ENCODE measurements at regions of chr19 and their contacts with region 1.

Region 1: DNA sequence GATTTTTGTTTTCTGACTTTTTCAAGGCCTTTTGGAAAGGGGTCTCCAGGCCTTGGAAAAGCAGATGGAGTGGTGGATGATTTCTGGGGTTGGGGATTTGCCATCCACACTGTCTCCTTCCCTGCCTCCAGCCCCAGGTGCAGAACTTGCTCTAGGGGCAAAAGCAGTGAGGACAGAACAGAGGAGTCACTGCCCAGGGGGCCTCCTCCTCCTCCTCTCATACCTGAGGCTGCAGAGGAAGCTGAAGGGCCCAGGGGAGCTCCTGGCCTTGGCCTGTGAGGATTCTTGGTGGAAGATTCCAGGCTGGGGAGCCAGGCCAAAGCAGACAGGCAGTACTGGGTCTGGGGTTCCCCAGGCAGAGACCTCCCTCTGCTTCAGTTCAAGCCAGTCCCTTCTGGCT is 52.3 kb upstream of the URI1 start:
- DNase-seq: no peak
- ATAC-seq: no peak
- H3K4me3 ChIP-seq: no peak overlapping the region
- H3K27ac ChIP-seq: no peak overlapping the region
- H3K4me1 ChIP-seq: no peaks in the 10 kb centered on the region
- H3K27me3 ChIP-seq: no peaks in the 10 kb centered on the region
- CTCF ChIP-seq: no peak
- POLR2A ChIP-seq: no peak
- RAD21 ChIP-seq: no peak

Region 2: DNA sequence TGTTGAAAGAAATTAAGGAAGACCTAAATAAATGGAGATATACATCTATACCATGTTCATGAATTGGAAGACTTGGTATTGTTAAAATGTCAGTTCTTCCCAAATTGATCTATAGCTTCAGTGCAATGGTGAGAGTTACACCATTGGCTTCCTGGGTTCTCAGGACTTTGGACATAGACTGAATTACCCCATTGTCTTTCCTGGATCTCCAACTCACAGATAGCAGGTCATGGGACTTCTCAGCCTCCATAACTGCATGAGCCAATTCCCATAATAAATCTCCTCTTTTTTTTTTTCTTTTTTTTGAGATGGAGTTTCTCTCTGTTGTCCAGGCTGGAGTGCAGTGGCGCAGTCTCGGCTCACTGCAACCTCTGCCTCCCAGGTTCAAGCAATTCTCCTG is 39.2 kb before region 1 on chr19:
- CTCF ChIA-PET with region 1: no interaction called
- POLR2A ChIA-PET with region 1: interaction called, 12 read pairs
- dilution Hi-C with region 1: no loop called
- in situ Hi-C with region 1: no loop called
- intact Hi-C with region 1: no loop called
- DNase-seq: no peak
- ATAC-seq: no peak
- H3K4me3 ChIP-seq: no peak overlapping the region
- H3K27ac ChIP-seq: no peak overlapping the region
- H3K4me1 ChIP-seq: no peaks in the 10 kb centered on the region
- H3K27me3 ChIP-seq: peaks cover 6% of the 10 kb centered on the region
- CTCF ChIP-seq: no peak
- POLR2A ChIP-seq: no peak
- RAD21 ChIP-seq: no peak

Region 3: GRCh38 chr19:29927944-29928625 is 38.4 kb after region 1 on chr19:
- CTCF ChIA-PET with region 1: no interaction called
- POLR2A ChIA-PET with region 1: no interaction called
- dilution Hi-C with region 1: no loop called
- in situ Hi-C with region 1: no loop called
- intact Hi-C with region 1: no loop called
- DNase-seq: no peak
- ATAC-seq: no peak
- H3K4me3 ChIP-seq: no peak overlapping the region
- H3K27ac ChIP-seq: no peak overlapping the region
- H3K4me1 ChIP-seq: no peaks in the 10 kb centered on the region
- H3K27me3 ChIP-seq: no peaks in the 10 kb centered on the region
- CTCF ChIP-seq: no peak
- POLR2A ChIP-seq: no peak
- RAD21 ChIP-seq: no peak

Region 4: DNA sequence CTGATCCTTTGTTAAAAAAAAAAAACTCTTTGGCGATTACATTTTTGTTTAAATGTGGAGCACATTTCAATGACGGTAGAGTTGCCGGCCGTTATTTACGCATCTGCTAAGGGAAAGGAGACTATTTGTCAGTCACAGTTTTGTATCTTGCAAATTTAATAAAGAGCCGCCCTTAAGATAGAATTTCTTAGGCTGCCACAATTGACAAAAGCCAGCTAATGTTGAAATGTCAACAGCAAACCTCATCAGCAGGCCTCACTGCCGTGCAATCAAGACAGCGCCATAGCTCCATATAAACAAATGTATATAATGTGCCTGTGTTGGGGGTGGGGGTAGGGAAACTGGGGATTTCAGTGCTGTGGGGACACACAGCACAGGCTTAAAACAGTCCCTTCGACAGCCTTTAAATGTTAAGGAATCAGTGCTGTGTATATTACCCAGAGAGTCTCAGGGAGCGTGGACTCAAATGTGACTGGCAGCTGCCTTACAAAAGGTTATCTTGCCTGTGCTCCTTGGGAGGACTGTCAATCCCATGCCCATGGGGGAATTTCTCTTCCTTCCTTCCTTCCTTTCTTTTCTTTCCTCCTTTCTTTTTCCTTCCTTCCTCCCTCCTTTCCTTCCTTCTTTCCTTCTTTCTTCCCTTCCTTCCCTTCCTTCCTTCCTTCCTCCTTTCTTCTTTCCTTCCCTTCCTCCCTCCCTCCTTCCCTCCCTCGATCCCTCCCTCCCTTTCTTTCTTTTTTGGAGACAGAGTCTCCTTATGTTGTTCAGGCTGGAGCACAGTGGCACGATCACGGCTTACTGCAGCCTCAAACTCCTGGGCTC is 160.4 kb after region 1 on chr19:
- CTCF ChIA-PET with region 1: no interaction called
- POLR2A ChIA-PET with region 1: no interaction called
- dilution Hi-C with region 1: no loop called
- in situ Hi-C with region 1: no loop called
- intact Hi-C with region 1: no loop called
- DNase-seq: no peak
- ATAC-seq: peak; percentile 16; the same call in 1 of the 2 replicates
- H3K4me3 ChIP-seq: no peak overlapping the region
- H3K27ac ChIP-seq: no peak overlapping the region
- H3K4me1 ChIP-seq: no peaks in the 10 kb centered on the region; the same call in 1 of the 2 replicates
- H3K27me3 ChIP-seq: no peaks in the 10 kb centered on the region
- CTCF ChIP-seq: no peak
- POLR2A ChIP-seq: no peak
- RAD21 ChIP-seq: no peak

Measured in IMR-90 (cell line).